Activated T-helper 2 cell treated with anti-CD3 and anti-CD28 coated beads, Interferon-gamma antibody, Interleukin-2, Interleukin-4, amounts not matched to agents 10 μg/mL and 5 μg/mL and 100 μg/mL, durations not matched to agents 14 hours and 24 hours and 36 hours (primary cell): ENCODE measurements at regions of chr14 and their contacts with region 1.

Region 1: DNA sequence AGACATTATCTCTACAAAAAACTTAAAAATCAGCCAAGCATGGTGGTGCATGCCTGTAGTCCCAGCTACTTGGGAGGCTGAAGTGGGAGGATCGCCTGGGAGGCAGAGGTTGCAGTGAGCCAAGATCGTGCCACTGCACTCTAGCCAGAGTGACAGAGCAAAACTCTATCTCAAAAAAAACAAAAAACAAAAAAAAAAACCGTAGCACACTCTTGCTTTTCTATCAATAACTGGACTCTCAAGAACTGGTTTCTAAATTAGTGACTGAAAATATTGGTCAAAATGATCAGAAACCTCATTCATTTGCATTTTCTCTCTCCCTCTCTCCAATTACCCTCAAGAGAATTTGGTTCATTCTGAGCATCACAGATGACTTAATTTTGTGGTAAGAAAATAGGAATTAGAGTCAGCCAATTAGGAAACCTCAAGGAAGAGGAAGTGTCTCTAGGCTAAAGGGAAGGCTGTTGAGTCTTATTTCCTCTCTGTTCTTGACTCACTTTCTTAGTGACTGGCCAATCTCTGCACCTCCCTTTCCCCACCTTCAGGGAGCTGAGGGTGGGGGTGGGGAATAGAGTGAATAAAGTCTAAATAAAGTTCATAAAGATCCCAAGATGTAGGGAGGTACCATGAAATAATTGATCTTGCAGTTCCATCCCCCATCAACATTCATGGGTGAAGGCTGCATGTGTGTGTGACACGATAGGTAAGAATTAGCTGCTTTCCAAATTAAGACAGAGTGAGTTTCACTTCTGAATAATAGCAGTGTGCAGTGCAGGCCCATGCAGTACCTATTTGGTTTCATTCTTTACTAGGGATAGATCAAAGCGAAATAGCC is 6.8 kb upstream of the PSMA6 start:
- DNase-seq: no peak
- H3K4me3 Mint-ChIP-seq: peak overlapping the region; percentile 55
- H3K27ac Mint-ChIP-seq: peak overlapping the region; percentile 82
- H3K4me1 Mint-ChIP-seq: peaks cover 41% of the 10 kb centered on the region
- H3K27me3 Mint-ChIP-seq: no peaks in the 10 kb centered on the region

Region 2: DNA sequence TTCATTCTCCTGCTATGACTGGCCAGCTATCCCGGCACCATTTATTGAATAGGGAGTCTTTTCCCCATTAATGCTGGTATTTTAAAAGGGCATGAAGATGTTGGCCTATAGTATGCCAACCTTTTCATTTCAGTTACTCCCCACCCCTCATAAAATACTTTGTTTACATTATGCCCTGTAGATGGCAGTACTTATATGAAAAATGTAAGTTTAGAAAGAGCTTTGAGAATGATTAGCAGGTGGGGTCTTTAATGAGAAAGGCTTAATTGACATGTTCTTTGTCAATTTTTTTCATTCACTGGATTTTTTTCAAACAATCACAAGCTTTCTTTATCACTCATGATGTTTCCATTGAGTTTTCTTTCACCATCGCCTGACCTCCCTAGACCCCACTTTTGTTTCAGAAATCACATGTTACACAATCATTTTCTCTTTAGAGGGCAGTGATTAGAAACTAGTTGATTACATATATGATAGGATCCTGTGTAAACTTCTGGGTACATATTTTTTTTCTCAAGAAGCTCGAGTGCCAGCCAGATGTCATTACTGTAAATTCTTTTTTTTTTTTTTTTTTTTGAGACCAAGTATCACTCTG is 55.8 kb before region 1 on chr14:
- intact Hi-C with region 1: loop called (anchors 2 kb)
- DNase-seq: no peak
- H3K4me3 Mint-ChIP-seq: no peak overlapping the region
- H3K27ac Mint-ChIP-seq: peak overlapping the region; percentile 15
- H3K4me1 Mint-ChIP-seq: peaks cover 20% of the 10 kb centered on the region
- H3K27me3 Mint-ChIP-seq: no peaks in the 10 kb centered on the region

Region 3: GRCh38 chr14:35254736-35255135 is 30.6 kb before region 1 on chr14:
- intact Hi-C with region 1: loop called (anchors 2 kb)
- DNase-seq: no peak
- H3K4me3 Mint-ChIP-seq: peak overlapping the region; percentile 5
- H3K27ac Mint-ChIP-seq: peak overlapping the region; percentile 30
- H3K4me1 Mint-ChIP-seq: peaks cover 43% of the 10 kb centered on the region
- H3K27me3 Mint-ChIP-seq: no peaks in the 10 kb centered on the region

Region 4: GRCh38 chr14:35355981-35356841 is 70.8 kb after region 1 on chr14:
- intact Hi-C with region 1: loop called (anchors 2 kb)
- DNase-seq: no peak
- H3K4me3 Mint-ChIP-seq: peak overlapping the region; percentile 0
- H3K27ac Mint-ChIP-seq: peak overlapping the region; percentile 87
- H3K4me1 Mint-ChIP-seq: peaks cover 29% of the 10 kb centered on the region
- H3K27me3 Mint-ChIP-seq: no peaks in the 10 kb centered on the region